ENCODE measurements at regions of chr17 and their contacts with region 1.

Region 1: GRCh38 chr17:28849281-28849680 is 5.5 kb upstream of the ERAL1 start:
- DNase-seq: no peak
- ATAC-seq: peak; percentile 38
- H3K4me3 Mint-ChIP-seq: no peak overlapping the region
- H3K27ac Mint-ChIP-seq: no peak overlapping the region
- H3K4me1 Mint-ChIP-seq: peaks cover 9% of the 10 kb centered on the region
- H3K27me3 Mint-ChIP-seq: no peaks in the 10 kb centered on the region

Region 2: DNA sequence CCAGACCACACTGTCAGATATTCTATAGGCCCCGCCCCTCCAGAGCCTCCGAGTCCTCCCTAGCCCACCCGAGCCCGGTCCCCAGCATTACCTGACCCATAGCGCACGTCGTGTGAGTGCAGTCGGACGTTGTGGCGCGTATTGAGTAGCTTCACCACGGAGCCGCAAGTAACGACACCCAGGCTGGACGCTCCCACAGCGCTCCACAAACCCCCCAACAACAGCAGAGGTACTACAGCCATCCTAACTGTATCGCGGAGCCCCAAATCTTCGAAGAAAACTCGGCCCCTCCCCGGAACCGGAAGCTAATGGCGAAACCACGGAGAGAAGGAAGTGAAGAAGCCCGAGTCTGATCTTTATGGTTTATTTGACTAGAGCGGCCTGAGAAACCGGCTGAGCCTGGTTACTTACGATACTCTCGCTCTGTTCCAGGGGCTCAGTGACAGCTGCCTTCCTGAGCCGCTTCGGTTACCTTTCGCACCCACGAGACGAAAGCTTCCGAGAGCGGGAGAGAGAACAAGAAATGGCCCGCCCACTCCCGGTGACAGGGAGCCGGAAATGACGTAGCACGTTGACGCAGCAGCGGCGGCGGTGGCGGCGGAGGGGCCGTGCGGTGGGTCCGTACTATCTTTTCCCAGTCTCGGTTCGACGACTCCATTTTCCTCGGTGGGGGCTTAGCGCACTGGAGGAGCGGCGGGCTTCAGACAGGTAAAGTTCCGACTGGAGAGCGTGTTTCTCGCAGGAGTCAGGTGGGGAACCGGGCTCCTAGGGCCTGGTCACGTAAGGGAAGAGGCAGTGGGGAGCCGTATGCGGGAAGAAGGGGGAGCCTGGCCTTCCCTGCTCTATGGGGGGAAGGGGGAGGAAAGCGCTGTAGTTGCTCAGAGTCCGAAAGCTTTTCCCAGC is 187.4 kb before region 1 on chr17 and contains the starts of genes SDF2 and SUPT6H:
- CTCF ChIA-PET with region 1: no interaction called
- DNase-seq: peak; percentile 95
- ATAC-seq: peak; percentile 90
- H3K4me3 Mint-ChIP-seq: peak within 1 kb of the TSS; percentile 97
- H3K27ac Mint-ChIP-seq: peak within 1 kb of the TSS; percentile 99
- H3K4me1 Mint-ChIP-seq: peaks cover 48% of the 10 kb centered on the region
- H3K27me3 Mint-ChIP-seq: no peaks in the 10 kb centered on the region
- total RNA-seq, gene SDF2: 45.9 to 48.9 TPM
- total RNA-seq, gene SUPT6H: 64.7 to 81.2 TPM

Region 3: GRCh38 chr17:28871056-28871579 is 21.8 kb after region 1 on chr17:
- CTCF ChIA-PET with region 1: interaction called, 10 read pairs
- DNase-seq: peak; percentile 86
- ATAC-seq: peak; percentile 99
- H3K4me3 Mint-ChIP-seq: no peak overlapping the region
- H3K27ac Mint-ChIP-seq: peak overlapping the region; percentile 93
- H3K4me1 Mint-ChIP-seq: peaks cover 24% of the 10 kb centered on the region
- H3K27me3 Mint-ChIP-seq: no peaks in the 10 kb centered on the region

Region 4: DNA sequence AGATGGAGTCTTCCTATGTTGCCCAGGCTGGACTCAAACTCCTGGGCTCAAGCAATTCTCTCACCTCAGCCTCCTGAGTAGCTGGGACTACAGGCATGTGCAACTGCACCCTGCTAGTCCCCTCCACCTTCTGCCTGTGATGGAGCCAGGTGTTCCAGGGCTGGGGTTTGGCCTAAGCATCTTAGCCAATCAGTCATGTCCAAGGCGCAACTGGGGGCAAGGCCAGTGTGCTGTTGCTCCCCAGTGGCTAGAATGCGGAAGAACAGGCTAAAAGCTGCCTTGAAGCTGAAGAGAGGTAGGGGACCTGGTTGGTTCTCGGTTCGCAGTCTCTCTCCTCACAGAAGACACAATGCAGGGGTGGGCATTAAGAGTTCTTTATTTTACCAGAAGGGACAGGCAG is 29.7 kb after region 1 on chr17:
- CTCF ChIA-PET with region 1: interaction called, 10 read pairs
- DNase-seq: no peak
- ATAC-seq: no peak
- H3K4me3 Mint-ChIP-seq: no peak overlapping the region
- H3K27ac Mint-ChIP-seq: no peak overlapping the region
- H3K4me1 Mint-ChIP-seq: peaks cover 20% of the 10 kb centered on the region
- H3K27me3 Mint-ChIP-seq: no peaks in the 10 kb centered on the region

Region 5: GRCh38 chr17:28896884-28897768 is 47.8 kb after region 1 on chr17 and contains the start of gene FLOT2:
- CTCF ChIA-PET with region 1: interaction called, 24 read pairs
- DNase-seq: peak; percentile 78
- ATAC-seq: peak; percentile 69
- H3K4me3 Mint-ChIP-seq: peak within 1 kb of the TSS; percentile 91
- H3K27ac Mint-ChIP-seq: peak within 1 kb of the TSS; percentile 93
- H3K4me1 Mint-ChIP-seq: peaks cover 63% of the 10 kb centered on the region
- H3K27me3 Mint-ChIP-seq: no peaks in the 10 kb centered on the region
- total RNA-seq, gene FLOT2: 143 to 191 TPM

Region 6: GRCh38 chr17:28902819-28903545 is 53.7 kb after region 1 on chr17 and contains the start of gene DHRS13:
- CTCF ChIA-PET with region 1: interaction called, 24 read pairs
- DNase-seq: peak; percentile 94
- ATAC-seq: peak; percentile 97
- H3K4me3 Mint-ChIP-seq: peak within 1 kb of the TSS; percentile 89
- H3K27ac Mint-ChIP-seq: peak within 1 kb of the TSS; percentile 84
- H3K4me1 Mint-ChIP-seq: peaks cover 43% of the 10 kb centered on the region
- H3K27me3 Mint-ChIP-seq: no peaks in the 10 kb centered on the region
- total RNA-seq, gene DHRS13: 23.1 to 25.9 TPM